Natural killer cell (primary cell): ENCODE measurements at regions of chr18 and their contacts with region 1.

Region 1: DNA sequence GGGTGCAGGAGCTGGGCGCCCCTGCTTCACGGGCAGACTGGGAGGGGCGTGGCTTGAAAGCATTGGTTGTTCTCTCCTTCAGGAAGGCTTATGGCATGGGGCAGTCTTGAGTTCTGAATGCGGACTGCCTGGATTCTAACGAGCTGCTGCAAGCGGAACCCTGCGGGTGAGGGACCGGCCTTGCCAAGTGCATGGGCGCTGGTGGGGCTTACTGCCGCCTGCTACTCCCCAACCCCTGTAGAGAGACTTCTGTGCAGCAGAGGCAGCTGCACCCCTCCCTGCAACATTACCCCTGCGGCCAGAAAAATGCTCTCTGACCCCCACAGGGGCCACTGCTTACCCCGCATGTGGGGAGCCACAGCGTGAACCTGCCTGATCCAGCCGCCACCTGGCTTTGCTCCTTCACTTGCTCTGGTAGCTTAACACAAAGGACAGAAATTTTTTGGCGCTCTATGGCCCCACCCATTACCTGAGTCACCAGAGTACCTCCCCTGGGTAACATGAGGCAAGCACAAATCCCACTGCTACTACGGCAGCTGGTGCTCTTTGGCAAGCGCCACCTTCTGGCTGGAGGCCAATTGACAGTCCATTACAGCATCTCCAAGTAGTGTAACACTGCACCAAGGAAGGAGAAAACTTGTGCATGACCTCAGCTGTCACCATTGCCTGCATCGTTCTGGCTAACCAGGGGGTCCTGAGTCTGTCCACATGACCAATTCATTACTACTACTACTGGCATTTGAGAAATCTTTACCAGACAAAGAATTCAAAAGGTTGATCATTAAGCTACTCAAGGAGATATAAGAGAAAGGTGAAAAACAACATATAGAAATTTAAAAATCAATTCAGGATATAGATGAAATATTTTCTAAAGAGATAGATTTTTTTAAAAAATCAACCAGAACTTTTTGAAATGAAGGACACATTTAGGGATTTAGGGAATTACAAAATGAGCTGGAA is 35.4 kb downstream of the MYL12B start:
- DNase-seq: peak; percentile 87 to 95
- ATAC-seq: peak; percentile 98 to 99 (median 99)
- H3K4me3 ChIP-seq: peak overlapping the region; percentile 81
- H3K4me3 Mint-ChIP-seq: peak overlapping the region; percentile 93
- H3K27ac ChIP-seq: peak overlapping the region; percentile 52
- H3K27ac Mint-ChIP-seq: peak overlapping the region; percentile 37 to 88
- H3K4me1 ChIP-seq: peaks cover 14% of the 10 kb centered on the region
- H3K4me1 Mint-ChIP-seq: peaks cover 7 to 14% of the 10 kb centered on the region in 2 donors
- H3K27me3 ChIP-seq: peaks cover 17% of the 10 kb centered on the region
- H3K27me3 Mint-ChIP-seq: peaks cover 27 to 38% of the 10 kb centered on the region in 2 donors
- CTCF ChIP-seq: peak; percentile 75

Region 2: DNA sequence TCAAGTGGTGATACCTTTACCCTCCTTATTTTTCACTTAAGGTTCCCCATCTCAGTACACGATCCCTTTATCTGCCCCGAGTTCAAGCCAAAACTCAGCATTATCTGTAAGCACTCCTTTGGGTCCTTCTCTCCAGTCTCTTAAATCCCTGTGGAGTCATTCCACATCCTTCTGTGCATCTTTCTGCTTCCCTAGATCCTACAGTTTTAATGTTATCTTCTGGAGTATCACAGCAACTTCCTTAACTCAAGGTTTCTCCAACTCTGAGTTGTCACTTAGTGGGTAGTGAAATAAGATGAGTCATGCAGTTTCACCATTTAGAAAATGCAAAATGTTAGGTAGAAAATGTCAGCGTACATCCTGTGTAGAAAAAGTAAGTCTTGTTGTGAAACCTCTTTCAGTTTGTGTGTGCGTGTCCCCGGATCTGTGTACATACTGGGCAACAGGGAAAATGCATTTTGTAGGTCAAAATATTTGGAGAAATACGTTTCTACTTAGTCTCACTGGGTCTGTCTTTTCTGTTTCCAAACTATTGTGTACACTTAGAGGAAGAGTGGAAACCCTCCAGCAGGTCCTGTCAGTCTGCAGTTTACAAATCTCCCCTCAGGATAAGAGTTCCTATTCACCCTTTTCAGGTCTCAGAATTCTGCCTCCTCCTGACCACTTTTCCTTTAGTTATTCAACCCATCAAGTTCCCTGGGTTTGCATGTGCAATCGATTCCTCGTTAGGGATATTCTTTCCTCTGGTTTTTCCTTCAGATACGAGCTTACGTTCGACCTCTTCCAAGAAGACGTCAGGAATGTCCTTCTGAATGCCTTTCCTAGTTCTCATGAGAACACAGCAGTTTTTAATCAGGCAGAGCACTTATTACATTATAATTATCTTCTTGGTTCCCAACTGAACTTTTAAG is 307.4 kb after region 1 on chr18:
- intact Hi-C with region 1: loop called (anchors 2 kb)
- DNase-seq: peak in 1 of 2 donors; percentile 72
- ATAC-seq: peak; percentile 70 to 86 (median 75)
- H3K4me3 ChIP-seq: peak overlapping the region; percentile 31
- H3K4me3 Mint-ChIP-seq: no peak overlapping the region
- H3K27ac ChIP-seq: peak overlapping the region; percentile 89
- H3K27ac Mint-ChIP-seq: no peak overlapping the region
- H3K4me1 ChIP-seq: peaks cover 34% of the 10 kb centered on the region
- H3K4me1 Mint-ChIP-seq: no peaks in the 10 kb centered on the region
- H3K27me3 ChIP-seq: no peaks in the 10 kb centered on the region
- H3K27me3 Mint-ChIP-seq: no peaks in the 10 kb centered on the region
- CTCF ChIP-seq: no peak